PC-3 (cell line): ENCODE measurements at regions of chr7 and their contacts with region 1.

Region 1: GRCh38 chr7:41148521-41148951 is 554.4 kb downstream of the INHBA start:
- DNase-seq: peak; percentile 97
- ATAC-seq: peak; percentile 85
- H3K4me3 ChIP-seq: no peak overlapping the region
- H3K27ac ChIP-seq: peak overlapping the region; percentile 99
- H3K4me1 ChIP-seq: peaks cover 48% of the 10 kb centered on the region
- H3K27me3 ChIP-seq: no peaks in the 10 kb centered on the region
- CTCF ChIP-seq: no peak

Region 2: DNA sequence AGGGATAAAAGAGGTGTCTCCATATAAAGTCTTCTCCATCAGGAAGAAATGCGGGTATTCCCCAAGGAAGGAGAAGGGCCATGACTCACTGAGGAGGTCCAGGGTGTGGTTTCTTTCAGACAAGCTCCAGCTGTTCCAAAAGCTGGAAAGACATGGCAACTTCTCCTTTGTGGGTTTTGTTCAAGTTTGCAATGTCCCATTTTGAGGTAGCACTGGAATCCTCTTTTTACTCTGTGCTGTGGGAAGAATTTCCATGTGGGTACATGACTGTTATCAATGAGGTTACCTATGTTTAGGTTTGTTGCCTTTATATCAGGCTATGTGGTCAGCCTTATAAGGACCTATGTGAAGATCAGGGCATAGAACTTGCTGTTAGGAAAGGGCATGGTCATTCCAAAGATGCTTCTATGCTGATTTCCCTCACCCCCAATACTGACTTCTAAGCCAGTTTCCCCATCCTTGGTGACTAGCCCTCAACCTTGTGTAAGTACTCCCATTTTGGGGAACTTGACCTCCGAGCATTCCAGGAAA is 143.1 kb before region 1 on chr7:
- CTCF ChIA-PET with region 1: no interaction called
- POLR2A ChIA-PET with region 1: no interaction called
- intact Hi-C with region 1: loop called (anchors 1 kb)
- DNase-seq: peak; percentile 81
- ATAC-seq: peak; percentile 43
- H3K4me3 ChIP-seq: no peak overlapping the region
- H3K27ac ChIP-seq: peak overlapping the region; percentile 84
- H3K4me1 ChIP-seq: peaks cover 54% of the 10 kb centered on the region
- H3K27me3 ChIP-seq: no peaks in the 10 kb centered on the region
- CTCF ChIP-seq: no peak

Region 3: GRCh38 chr7:41162612-41163011 is 14.1 kb after region 1 on chr7:
- CTCF ChIA-PET with region 1: no interaction called
- POLR2A ChIA-PET with region 1: no interaction called
- intact Hi-C with region 1: no loop called
- DNase-seq: no peak
- ATAC-seq: no peak
- H3K4me3 ChIP-seq: no peak overlapping the region
- H3K27ac ChIP-seq: no peak overlapping the region
- H3K4me1 ChIP-seq: peaks cover under 1% of the 10 kb centered on the region; the same call in 1 of the 2 replicates
- H3K27me3 ChIP-seq: no peaks in the 10 kb centered on the region
- CTCF ChIP-seq: no peak

Region 4: DNA sequence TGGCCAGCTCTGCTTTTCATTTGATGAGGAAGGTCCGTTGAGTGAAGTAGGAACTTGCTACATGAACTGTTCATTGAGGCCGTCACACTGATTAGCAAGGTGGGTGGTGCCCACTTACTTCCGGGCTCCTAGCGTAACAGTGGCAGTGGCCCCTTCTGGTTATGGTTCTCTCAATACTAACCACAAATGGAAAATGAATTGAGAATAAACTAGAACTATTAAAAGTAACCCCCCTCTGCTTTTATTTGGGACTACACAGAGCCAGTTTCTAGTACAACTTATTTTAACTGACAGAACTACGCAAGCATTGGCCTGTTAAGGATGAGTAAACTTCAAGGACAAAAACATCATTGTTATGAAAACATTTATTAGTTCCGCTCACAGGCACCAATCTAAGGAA is 35.2 kb after region 1 on chr7:
- CTCF ChIA-PET with region 1: no interaction called
- POLR2A ChIA-PET with region 1: interaction called, 5 read pairs
- intact Hi-C with region 1: loop called (anchors 1 kb)
- DNase-seq: peak; percentile 86
- ATAC-seq: peak; percentile 62
- H3K4me3 ChIP-seq: no peak overlapping the region
- H3K27ac ChIP-seq: peak overlapping the region; percentile 99
- H3K4me1 ChIP-seq: peaks cover 61% of the 10 kb centered on the region
- H3K27me3 ChIP-seq: no peaks in the 10 kb centered on the region
- CTCF ChIP-seq: 0 out of 2 replicates have a peak, but pooled peaks have one; percentile 17

Region 5: GRCh38 chr7:41224063-41224806 is 75.7 kb after region 1 on chr7:
- CTCF ChIA-PET with region 1: no interaction called
- POLR2A ChIA-PET with region 1: no interaction called
- intact Hi-C with region 1: loop called (anchors 2 kb)
- DNase-seq: peak; percentile 98
- ATAC-seq: peak; percentile 85
- H3K4me3 ChIP-seq: no peak overlapping the region
- H3K27ac ChIP-seq: peak overlapping the region; percentile 98
- H3K4me1 ChIP-seq: peaks cover 38% of the 10 kb centered on the region
- H3K27me3 ChIP-seq: no peaks in the 10 kb centered on the region
- CTCF ChIP-seq: no peak